Dendritic cell treated with granulocyte-macrophage colony-stimulating factor and Interleukin-4, amounts not matched to agents 40 ng/mL and 50 ng/mL, for 4 days (primary cell): ENCODE measurements at regions of chr16 and their contacts with region 1.

Region 1: DNA sequence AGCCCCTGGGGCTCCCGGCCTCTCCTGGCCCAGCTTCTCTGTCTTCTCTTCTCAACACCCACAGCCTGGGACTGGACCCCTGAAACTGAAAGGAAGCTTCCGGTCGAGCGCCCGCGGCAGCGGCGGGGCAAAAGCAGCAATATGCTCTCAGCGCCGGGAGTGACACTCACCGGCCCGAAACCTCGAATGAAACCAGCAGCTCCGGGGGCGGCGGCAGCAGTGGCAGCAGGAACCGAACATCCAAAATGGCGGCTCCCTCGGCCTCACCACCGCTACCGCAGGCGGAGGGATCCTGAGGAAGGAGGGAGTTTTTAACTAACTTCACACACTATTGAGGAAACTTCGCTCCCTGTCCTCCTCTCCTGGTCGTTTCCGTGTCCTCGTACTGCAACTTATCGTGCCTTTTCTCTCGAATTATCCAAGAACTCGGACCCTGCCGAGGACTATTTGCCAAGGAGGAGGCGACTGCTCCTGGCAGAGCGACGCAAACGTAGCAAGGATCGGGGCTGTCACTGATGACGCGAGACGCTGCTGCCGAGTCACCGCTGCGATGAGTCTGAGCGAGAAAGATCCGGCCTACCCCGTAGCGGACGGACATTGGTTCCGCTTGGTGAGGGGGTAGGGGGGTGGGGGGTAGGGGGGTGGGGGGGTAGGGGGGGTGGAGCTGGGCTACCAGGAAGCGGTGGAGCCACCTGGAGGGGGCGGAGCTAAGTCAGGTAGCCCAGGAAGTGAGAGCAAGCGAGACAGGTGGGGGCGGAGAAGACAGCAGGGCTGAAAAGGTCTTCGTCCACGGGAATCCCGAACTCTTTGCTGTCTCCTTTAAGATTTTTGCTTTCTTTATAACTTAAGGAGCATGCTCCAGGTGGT is at the start of gene AP1G1:
- H3K4me3 Mint-ChIP-seq: peak within 1 kb of the TSS; percentile 100
- H3K27ac Mint-ChIP-seq: peak within 1 kb of the TSS; percentile 98
- H3K4me1 Mint-ChIP-seq: peaks cover 19% of the 10 kb centered on the region
- H3K27me3 Mint-ChIP-seq: no peaks in the 10 kb centered on the region

Region 2: GRCh38 chr16:71723537-71724319 is 85.1 kb before region 1 on chr16:
- intact Hi-C with region 1: loop called (anchors 5 kb)
- H3K4me3 Mint-ChIP-seq: peak overlapping the region; percentile 95
- H3K27ac Mint-ChIP-seq: no peak overlapping the region
- H3K4me1 Mint-ChIP-seq: peaks cover 38% of the 10 kb centered on the region
- H3K27me3 Mint-ChIP-seq: peaks cover 24% of the 10 kb centered on the region

Region 3: GRCh38 chr16:71794943-71795342 is 13.9 kb before region 1 on chr16:
- intact Hi-C with region 1: no loop called
- H3K4me3 Mint-ChIP-seq: no peak overlapping the region
- H3K27ac Mint-ChIP-seq: no peak overlapping the region
- H3K4me1 Mint-ChIP-seq: peaks cover 35% of the 10 kb centered on the region
- H3K27me3 Mint-ChIP-seq: no peaks in the 10 kb centered on the region

Region 4: GRCh38 chr16:71845639-71846430 is 37.0 kb after region 1 on chr16 and contains the start of gene ATXN1L:
- intact Hi-C with region 1: loop called (anchors 2 kb)
- H3K4me3 Mint-ChIP-seq: peak within 1 kb of the TSS; percentile 90
- H3K27ac Mint-ChIP-seq: peak within 1 kb of the TSS; percentile 96
- H3K4me1 Mint-ChIP-seq: peaks cover 20% of the 10 kb centered on the region
- H3K27me3 Mint-ChIP-seq: no peaks in the 10 kb centered on the region

Region 5: GRCh38 chr16:71894921-71895678 is 86.3 kb after region 1 on chr16 and contains the start of gene IST1:
- intact Hi-C with region 1: loop called (anchors 1 kb)
- H3K4me3 Mint-ChIP-seq: peak within 1 kb of the TSS; percentile 91
- H3K27ac Mint-ChIP-seq: peak within 1 kb of the TSS; percentile 98
- H3K4me1 Mint-ChIP-seq: peaks cover 30% of the 10 kb centered on the region
- H3K27me3 Mint-ChIP-seq: no peaks in the 10 kb centered on the region

Region 6: DNA sequence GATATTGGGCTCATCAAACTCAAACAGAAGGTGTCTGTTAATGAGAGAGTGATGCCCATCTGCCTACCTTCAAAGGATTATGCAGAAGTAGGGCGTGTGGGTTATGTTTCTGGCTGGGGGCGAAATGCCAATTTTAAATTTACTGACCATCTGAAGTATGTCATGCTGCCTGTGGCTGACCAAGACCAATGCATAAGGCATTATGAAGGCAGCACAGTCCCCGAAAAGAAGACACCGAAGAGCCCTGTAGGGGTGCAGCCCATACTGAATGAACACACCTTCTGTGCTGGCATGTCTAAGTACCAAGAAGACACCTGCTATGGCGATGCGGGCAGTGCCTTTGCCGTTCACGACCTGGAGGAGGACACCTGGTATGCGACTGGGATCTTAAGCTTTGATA is 251.6 kb after region 1 on chr16:
- intact Hi-C with region 1: no loop called
- H3K4me3 Mint-ChIP-seq: no peak overlapping the region
- H3K27ac Mint-ChIP-seq: no peak overlapping the region
- H3K4me1 Mint-ChIP-seq: peaks cover 15% of the 10 kb centered on the region
- H3K27me3 Mint-ChIP-seq: no peaks in the 10 kb centered on the region